ENCODE measurements at regions of chr19 and their contacts with region 1.

Region 1: GRCh38 chr19:14147797-14148605 is 11.6 kb upstream of the ASF1B start:
- DNase-seq: no peak
- H3K4me3 ChIP-seq: peak overlapping the region in 2 of 4 donors; percentile 13 to 29
- H3K27ac ChIP-seq: peak overlapping the region; percentile 74 to 80 (median 78)
- H3K4me1 ChIP-seq: peaks cover 27 to 32% (median 32%) of the 10 kb centered on the region in 4 donors
- H3K27me3 ChIP-seq: no peaks in the 10 kb centered on the region
- CTCF ChIP-seq: peak; percentile 79 to 92 (median 88)
- EP300 ChIP-seq: no peak
- POLR2A ChIP-seq: no peak

Region 2: GRCh38 chr19:14198384-14199376 is 50.7 kb after region 1 on chr19:
- intact Hi-C with region 1: loop called (anchors 5 kb)
- DNase-seq: no peak
- H3K4me3 ChIP-seq: no peak overlapping the region
- H3K27ac ChIP-seq: no peak overlapping the region
- H3K4me1 ChIP-seq: peaks cover 0 to 57% (median 32%) of the 10 kb centered on the region in 4 donors
- H3K27me3 ChIP-seq: no peaks in the 10 kb centered on the region
- CTCF ChIP-seq: no peak
- EP300 ChIP-seq: no peak
- POLR2A ChIP-seq: no peak

Region 3: GRCh38 chr19:14347999-14348889 is 200.2 kb after region 1 on chr19:
- intact Hi-C with region 1: loop called (anchors 2 kb)
- DNase-seq: no peak
- H3K4me3 ChIP-seq: peak overlapping the region; percentile 32 to 54 (median 44)
- H3K27ac ChIP-seq: no peak overlapping the region
- H3K4me1 ChIP-seq: peaks cover 4 to 10% (median 9%) of the 10 kb centered on the region in 4 donors
- H3K27me3 ChIP-seq: no peaks in the 10 kb centered on the region
- CTCF ChIP-seq: peak; percentile 95 to 97 (median 96)
- EP300 ChIP-seq: no peak
- POLR2A ChIP-seq: no peak

Region 4: DNA sequence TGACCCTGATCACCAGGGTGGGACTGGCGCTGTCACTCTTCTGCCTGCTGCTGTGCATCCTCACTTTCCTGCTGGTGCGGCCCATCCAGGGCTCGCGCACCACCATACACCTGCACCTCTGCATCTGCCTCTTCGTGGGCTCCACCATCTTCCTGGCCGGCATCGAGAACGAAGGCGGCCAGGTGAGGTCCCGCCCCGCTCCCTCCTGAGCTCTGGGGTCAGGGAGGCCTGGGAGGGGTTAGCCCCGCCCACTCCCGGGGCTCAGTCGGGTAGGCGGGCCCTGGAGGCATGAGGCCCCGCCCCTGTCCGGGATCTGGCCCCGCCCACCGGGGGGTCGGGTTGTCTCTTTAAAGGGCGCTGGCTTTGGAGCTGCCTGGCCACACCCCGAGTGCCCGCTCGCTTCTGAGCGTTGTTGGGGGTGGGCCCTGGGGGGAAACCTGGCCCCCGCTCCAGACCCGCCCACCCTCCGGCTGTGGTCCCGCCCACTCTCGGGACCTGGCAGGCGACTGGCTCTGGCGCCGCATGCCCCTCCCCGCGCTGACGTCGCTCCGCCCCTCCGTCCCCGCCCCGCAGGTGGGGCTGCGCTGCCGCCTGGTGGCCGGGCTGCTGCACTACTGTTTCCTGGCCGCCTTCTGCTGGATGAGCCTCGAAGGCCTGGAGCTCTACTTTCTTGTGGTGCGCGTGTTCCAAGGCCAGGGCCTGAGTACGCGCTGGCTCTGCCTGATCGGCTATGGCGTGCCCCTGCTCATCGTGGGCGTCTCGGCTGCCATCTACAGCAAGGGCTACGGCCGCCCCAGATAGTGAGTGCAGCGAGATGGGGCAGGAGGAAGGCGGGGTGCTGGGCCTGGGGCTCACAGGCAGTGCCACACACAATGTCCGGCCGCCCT is 258.0 kb after region 1 on chr19:
- intact Hi-C with region 1: loop called (anchors 5 kb)
- DNase-seq: peak; percentile 96
- H3K4me3 ChIP-seq: peak overlapping the region; percentile 40 to 55 (median 44)
- H3K27ac ChIP-seq: peak overlapping the region; percentile 66 to 87 (median 80)
- H3K4me1 ChIP-seq: peaks cover 5 to 19% (median 18%) of the 10 kb centered on the region in 4 donors
- H3K27me3 ChIP-seq: no peaks in the 10 kb centered on the region
- CTCF ChIP-seq: peak; percentile 97 to 99 (median 98)
- EP300 ChIP-seq: no peak
- POLR2A ChIP-seq: no peak

Region 5: GRCh38 chr19:14472202-14472938 is 324.4 kb after region 1 on chr19:
- intact Hi-C with region 1: loop called (anchors 10 kb)
- DNase-seq: peak; percentile 94
- H3K4me3 ChIP-seq: peak overlapping the region; percentile 28 to 49 (median 35)
- H3K27ac ChIP-seq: peak overlapping the region in 1 of 4 donors; percentile 42
- H3K4me1 ChIP-seq: peaks cover 29 to 60% (median 55%) of the 10 kb centered on the region in 4 donors
- H3K27me3 ChIP-seq: peaks cover 0 to 34% (median 9%) of the 10 kb centered on the region in 4 donors
- CTCF ChIP-seq: peak in 2 of 3 experiments; percentile 94 to 98
- EP300 ChIP-seq: no peak
- POLR2A ChIP-seq: no peak